ENCODE measurements at regions of chr2 and their contacts with region 1.

Region 1: GRCh38 chr2:25376750-25377621 is 35.3 kb upstream of the DNMT3A start:
- DNase-seq: peak; percentile 87
- H3K4me3 Mint-ChIP-seq: peak overlapping the region; percentile 64
- H3K27ac Mint-ChIP-seq: no peak overlapping the region
- H3K4me1 Mint-ChIP-seq: peaks cover 9% of the 10 kb centered on the region
- H3K27me3 Mint-ChIP-seq: no peaks in the 10 kb centered on the region
- CTCF ChIP-seq: peak; percentile 86

Region 2: DNA sequence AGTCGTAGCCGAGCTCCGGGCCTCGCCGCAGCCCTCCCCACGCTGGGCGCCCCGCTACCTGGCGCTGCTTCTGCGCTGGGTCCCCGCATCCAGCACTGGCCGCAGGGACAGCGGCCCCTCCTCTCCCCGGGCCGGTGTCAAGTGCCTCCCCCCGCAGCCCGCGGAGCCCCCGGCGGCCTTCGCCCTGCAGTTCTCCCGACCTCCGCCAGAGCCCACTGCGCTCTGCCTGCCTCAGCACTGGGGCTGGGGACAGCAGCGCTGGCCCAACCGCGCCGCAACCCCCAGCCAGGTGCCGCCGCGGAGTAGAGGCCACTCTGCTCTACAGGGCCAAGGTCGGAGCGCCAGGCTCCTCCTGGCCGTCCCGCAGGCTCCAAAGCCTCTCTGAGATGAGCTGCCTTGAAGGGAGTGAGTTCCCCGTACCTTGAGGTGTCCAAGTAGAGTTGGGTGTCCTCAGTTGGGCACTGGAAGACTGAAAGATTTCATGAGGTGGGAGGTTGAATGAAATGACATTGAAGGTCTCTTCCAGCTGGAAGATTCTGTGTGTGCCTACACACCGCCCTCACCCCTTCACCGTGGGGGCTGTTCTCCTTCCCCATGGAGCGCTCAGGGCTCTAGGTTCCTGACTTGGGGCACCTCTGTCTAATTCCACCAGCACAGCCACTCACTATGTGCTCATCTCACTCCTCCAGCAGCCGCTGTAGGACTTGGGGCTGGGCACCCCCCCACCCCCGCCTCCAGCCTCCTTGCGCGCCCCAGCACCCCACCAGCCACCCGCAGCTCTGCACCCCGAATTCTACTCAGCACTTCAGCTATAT is 34.4 kb before region 1 on chr2:
- CTCF ChIA-PET with region 1: interaction called, 9 read pairs
- POLR2A ChIA-PET with region 1: no interaction called
- intact Hi-C with region 1: loop called (anchors 5 kb)
- DNase-seq: peak; percentile 72
- H3K4me3 Mint-ChIP-seq: peak overlapping the region; percentile 79
- H3K27ac Mint-ChIP-seq: no peak overlapping the region
- H3K4me1 Mint-ChIP-seq: peaks cover 5% of the 10 kb centered on the region
- H3K27me3 Mint-ChIP-seq: no peaks in the 10 kb centered on the region
- CTCF ChIP-seq: peak; percentile 88

Region 3: GRCh38 chr2:25362049-25362433 is 14.9 kb before region 1 on chr2:
- CTCF ChIA-PET with region 1: interaction called, 25 read pairs
- POLR2A ChIA-PET with region 1: interaction called, 4 read pairs
- intact Hi-C with region 1: no loop called
- DNase-seq: peak; percentile 93
- H3K4me3 Mint-ChIP-seq: peak overlapping the region; percentile 64
- H3K27ac Mint-ChIP-seq: peak overlapping the region; percentile 33
- H3K4me1 Mint-ChIP-seq: no peaks in the 10 kb centered on the region
- H3K27me3 Mint-ChIP-seq: peaks cover 10% of the 10 kb centered on the region
- CTCF ChIP-seq: peak; percentile 87

Region 4: GRCh38 chr2:25521665-25522387 is 144.8 kb after region 1 on chr2:
- CTCF ChIA-PET with region 1: no interaction called
- POLR2A ChIA-PET with region 1: no interaction called
- intact Hi-C with region 1: loop called (anchors 1 kb)
- DNase-seq: peak; percentile 76
- H3K4me3 Mint-ChIP-seq: no peak overlapping the region
- H3K27ac Mint-ChIP-seq: peak overlapping the region; percentile 68
- H3K4me1 Mint-ChIP-seq: peaks cover 16% of the 10 kb centered on the region
- H3K27me3 Mint-ChIP-seq: no peaks in the 10 kb centered on the region
- CTCF ChIP-seq: peak; percentile 68

Region 5: DNA sequence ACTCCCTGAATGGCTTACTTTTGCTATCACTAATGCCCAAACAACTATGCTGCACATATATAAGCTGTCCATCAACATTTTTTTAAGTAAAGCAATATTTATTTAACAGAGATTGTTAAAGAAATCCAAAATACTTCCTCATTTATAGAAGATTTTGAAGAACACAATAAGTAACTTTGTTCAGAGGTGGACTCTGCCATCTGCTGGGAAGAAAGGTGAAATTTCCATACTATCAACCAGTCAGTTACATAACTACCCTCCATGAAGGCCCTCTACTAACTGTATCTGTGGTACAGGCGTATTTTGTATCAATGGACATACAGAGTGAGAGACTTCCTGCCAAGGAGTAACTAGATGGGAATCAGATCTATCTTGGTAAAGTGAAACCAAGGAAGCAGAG is 190.4 kb after region 1 on chr2:
- CTCF ChIA-PET with region 1: no interaction called
- POLR2A ChIA-PET with region 1: no interaction called
- intact Hi-C with region 1: loop called (anchors 2 kb)
- DNase-seq: peak; percentile 44
- H3K4me3 Mint-ChIP-seq: no peak overlapping the region
- H3K27ac Mint-ChIP-seq: no peak overlapping the region
- H3K4me1 Mint-ChIP-seq: no peaks in the 10 kb centered on the region
- H3K27me3 Mint-ChIP-seq: no peaks in the 10 kb centered on the region
- CTCF ChIP-seq: peak; percentile 40

Region 6: DNA sequence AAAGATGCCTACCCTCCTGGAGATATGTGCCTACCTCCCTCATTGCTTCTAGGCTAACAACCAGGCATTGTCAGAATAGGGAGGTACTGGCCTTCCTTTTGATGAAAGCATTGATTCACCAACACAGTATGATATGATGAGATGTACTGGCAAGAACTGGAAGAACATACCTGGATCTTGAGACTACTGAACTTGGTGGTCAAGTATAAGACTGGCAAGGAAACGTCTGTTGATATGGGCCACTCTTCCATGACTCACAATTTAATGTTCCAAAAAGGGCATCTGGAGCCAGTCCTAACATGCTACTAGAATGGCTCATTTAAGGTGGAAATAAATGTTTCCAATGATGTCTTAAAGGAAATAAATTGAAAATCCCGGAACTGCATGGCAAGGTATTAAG is 278.3 kb after region 1 on chr2:
- CTCF ChIA-PET with region 1: no interaction called
- POLR2A ChIA-PET with region 1: no interaction called
- intact Hi-C with region 1: no loop called
- DNase-seq: peak; percentile 55
- H3K4me3 Mint-ChIP-seq: no peak overlapping the region
- H3K27ac Mint-ChIP-seq: peak overlapping the region; percentile 0
- H3K4me1 Mint-ChIP-seq: peaks cover 48% of the 10 kb centered on the region
- H3K27me3 Mint-ChIP-seq: no peaks in the 10 kb centered on the region
- CTCF ChIP-seq: no peak

Region 7: DNA sequence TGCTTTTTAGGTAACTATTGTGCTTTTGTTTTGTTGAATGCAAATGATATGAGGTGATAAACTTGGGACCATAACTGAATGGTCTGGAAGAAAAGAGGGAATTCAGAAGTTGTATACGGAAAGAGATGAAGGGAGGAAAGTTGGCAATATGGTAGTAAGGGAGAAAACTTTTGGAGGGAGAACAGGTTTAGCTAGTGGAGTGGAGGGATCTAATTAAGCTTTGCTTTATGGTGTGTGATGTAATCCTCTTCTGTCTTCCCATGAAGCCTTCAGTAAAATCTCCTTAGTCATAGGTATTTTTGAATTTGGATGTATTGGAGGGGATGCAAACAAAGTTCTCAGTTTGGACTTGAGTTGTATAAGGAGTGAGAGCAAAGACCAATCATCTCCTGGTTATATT is 636.7 kb after region 1 on chr2:
- CTCF ChIA-PET with region 1: no interaction called
- POLR2A ChIA-PET with region 1: no interaction called
- intact Hi-C with region 1: no loop called
- DNase-seq: no peak
- H3K4me3 Mint-ChIP-seq: no peak overlapping the region
- H3K27ac Mint-ChIP-seq: no peak overlapping the region
- H3K4me1 Mint-ChIP-seq: peaks cover 40% of the 10 kb centered on the region
- H3K27me3 Mint-ChIP-seq: no peaks in the 10 kb centered on the region
- CTCF ChIP-seq: no peak

Measured in MCF 10A (cell line).